Activated B cell treated with CpG ODN at 0.5 μM for 24 hours (primary cell): ENCODE measurements at regions of chr19 and their contacts with region 1.

Region 1: DNA sequence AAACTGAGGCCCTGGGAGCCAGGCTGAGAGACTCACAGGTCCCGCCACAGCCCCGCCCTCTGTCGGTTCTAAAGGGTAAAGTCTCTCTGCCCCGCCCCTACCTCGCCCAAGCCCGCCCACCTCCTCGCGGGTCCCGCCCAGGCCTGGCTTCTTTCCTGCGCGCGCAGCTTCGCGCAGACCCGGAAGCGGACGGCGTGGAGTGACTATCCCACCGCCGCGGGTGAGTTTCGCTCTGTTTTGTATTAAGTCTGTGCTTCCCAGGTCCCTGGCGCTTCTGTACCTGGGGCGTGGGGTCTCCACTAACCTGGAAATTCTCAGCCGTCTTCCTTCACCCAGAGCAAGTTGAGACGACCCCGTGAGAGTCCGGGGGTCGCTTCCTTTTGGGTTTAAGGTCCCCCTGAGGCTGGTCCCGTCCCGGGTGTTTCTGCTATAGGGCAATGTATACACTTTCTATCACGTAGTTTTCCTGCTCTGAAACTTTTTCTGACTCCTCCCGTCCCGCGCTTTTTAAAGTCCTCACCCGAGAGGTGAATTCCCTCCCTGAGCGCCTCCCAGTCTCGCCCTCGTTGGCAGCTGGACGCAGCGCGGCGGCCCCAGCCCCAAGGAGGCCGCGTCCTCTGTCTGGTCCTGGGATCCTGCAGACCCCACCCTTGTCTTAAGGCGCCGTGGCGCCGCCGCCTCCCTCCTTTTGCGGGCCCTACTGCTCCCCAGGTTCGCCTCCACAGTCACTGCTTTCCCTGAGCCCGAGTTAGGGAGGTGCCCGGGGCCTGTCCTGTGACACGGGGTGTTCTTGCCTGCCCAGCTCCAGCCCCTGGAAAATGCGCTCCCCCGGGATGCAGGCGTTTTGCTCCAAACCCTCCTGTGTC is at the start of gene ZNF765:
- DNase-seq: peak; percentile 98
- ATAC-seq: peak; percentile 99
- H3K4me3 Mint-ChIP-seq: peak within 1 kb of the TSS; percentile 95
- H3K27ac Mint-ChIP-seq: peak within 1 kb of the TSS; percentile 90
- H3K4me1 Mint-ChIP-seq: peaks cover 29% of the 10 kb centered on the region
- H3K27me3 Mint-ChIP-seq: no peaks in the 10 kb centered on the region
- CTCF ChIP-seq: no peak
- total RNA-seq, gene ZNF765: 16.2 and 18.9 TPM in 2 replicates

Region 2: DNA sequence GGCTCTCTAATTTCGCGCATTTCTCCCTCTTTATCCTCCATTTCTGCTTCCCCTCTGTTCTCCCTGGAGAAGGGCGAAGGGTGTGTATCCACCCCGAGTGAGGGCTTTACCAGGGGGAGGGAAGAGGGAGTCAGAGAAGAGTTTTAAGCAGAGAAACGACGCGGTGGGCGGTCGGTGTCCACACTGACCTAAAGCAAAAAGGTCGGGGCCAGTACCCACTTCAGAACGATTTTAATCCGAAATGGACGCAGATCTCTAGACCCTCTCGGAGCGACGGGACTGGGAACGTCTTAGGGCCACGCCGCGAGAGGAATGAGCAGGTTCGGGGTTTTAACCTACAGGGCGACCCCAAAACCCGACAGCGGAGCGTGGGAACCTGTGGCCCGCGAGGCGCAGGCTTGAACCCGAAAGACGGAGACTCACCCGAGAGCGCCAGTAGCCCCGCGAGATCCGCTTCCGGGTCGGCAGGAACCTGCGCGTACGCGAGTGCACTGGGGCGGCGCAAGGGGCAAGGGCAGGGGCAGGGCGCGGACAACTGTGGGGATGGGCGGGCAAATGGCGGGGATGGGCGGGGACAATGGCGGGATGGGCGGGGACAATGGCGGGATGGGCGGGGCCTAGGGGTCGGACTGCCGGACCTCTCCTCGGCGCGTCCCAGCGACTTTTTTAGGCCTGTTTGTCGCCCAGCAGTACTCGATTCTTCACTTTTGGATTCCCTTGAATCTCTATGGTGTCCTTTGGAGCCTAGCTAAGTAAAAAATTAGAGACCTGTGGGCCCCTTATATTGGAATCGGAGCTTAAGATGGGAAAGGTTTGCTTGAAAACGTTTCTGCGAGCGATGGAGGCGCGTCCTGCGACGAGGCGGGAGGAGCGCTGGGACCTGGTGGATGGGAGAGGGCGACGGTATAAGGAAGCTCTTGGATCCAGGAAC is 140.5 kb before region 1 on chr19 and contains the start of gene ZNF677:
- CTCF ChIA-PET with region 1: no interaction called
- POLR2A ChIA-PET with region 1: no interaction called
- intact Hi-C with region 1: loop called (anchors 1 kb)
- DNase-seq: peak; percentile 57
- ATAC-seq: peak; percentile 99
- H3K4me3 Mint-ChIP-seq: peak within 1 kb of the TSS; percentile 87
- H3K27ac Mint-ChIP-seq: peak within 1 kb of the TSS; percentile 77
- H3K4me1 Mint-ChIP-seq: peaks cover 12% of the 10 kb centered on the region
- H3K27me3 Mint-ChIP-seq: no peaks in the 10 kb centered on the region
- CTCF ChIP-seq: no peak
- total RNA-seq, gene ZNF677: 13.7 and 14.2 TPM in 2 replicates

Region 3: DNA sequence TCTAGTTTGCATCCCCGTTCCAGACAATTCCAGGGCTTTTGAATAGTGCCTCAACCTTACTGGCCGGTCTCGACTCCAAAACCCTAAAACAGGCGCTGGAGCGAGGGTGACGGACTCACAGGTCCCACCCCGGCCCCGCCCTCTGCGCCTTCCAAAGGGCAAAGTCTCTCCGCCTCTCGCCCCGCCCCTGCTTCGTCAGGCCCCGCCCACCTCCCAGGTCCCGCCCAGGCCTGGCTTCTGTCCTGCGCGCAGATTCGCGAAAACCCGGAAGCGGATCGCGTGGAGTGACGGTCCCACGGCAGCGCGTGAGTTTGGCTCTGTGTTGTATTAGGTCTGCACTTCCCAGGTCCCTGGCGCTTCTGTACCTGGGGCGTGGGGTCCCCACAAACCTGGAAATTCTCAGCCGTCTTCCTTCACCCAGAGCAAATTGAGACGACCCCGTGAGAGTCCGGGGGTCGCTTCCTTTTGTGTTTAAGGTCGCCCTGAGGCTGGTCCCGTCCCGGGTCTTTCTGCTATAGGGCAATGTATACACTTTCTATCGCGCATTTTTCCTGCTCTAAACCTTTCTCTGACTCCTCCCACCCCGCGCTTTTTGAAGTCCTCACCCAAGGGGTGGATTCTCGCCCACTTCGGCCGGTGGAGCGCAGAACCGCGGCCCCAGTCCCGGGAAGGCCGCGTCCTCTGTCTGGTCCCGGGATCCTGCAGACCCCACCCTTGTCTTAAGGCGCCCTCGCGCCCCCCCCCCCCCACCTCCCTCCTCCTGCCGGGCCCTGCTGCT is 72.5 kb after region 1 on chr19 and contains the start of gene ZNF813:
- CTCF ChIA-PET with region 1: no interaction called
- POLR2A ChIA-PET with region 1: interaction called, 3 read pairs
- intact Hi-C with region 1: loop called (anchors 1 kb)
- DNase-seq: peak; percentile 97
- ATAC-seq: peak; percentile 99
- H3K4me3 Mint-ChIP-seq: peak within 1 kb of the TSS; percentile 94
- H3K27ac Mint-ChIP-seq: peak within 1 kb of the TSS; percentile 90
- H3K4me1 Mint-ChIP-seq: peaks cover 32% of the 10 kb centered on the region
- H3K27me3 Mint-ChIP-seq: peaks cover 18% of the 10 kb centered on the region
- CTCF ChIP-seq: no peak
- total RNA-seq, gene ZNF813: 8.2 and 10.7 TPM in 2 replicates